Right cardiac atrium (tissue), 5 donors: ENCODE measurements at regions of chr7 and their contacts with region 1.

Region 1: DNA sequence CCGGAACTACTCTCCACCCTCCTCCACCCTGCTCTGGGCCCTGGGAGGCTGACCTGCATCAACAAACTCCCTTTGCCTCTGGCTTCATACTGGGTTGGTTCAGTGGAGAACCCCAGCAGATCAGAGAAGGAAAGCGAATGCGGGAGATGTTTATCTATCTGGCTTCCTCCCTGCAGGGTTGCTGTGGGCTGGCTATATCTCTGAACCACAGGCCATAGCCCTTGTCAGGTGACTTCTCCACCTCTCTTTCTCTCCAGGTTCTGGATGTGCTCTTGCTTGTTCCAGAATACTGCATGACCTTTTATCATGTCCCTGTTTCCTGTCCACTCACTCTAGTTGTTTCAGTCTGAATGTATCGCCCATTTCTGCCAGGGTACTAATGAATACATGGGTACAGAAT is 51.7 kb upstream of the IFRD1 start:
- DNase-seq: no peak
- ATAC-seq: no peak
- H3K4me3 ChIP-seq: no peak overlapping the region
- H3K27ac ChIP-seq: no peak overlapping the region
- H3K4me1 ChIP-seq: no peaks in the 10 kb centered on the region
- H3K27me3 ChIP-seq: no peaks in the 10 kb centered on the region

Region 2: GRCh38 chr7:111741811-111742240 is 656.7 kb before region 1 on chr7:
- intact Hi-C with region 1: loop called in 1 of 4 experiments (anchors 10 kb)
- DNase-seq: peak; percentile 29 to 70 (median 62)
- ATAC-seq: peak; percentile 61 to 63
- H3K4me3 ChIP-seq: no peak overlapping the region
- H3K27ac ChIP-seq: no peak overlapping the region
- H3K4me1 ChIP-seq: no peaks in the 10 kb centered on the region
- H3K27me3 ChIP-seq: no peaks in the 10 kb centered on the region